GM12878 (cell line): ENCODE measurements at regions of chr9 and their contacts with region 1.

Region 1: DNA sequence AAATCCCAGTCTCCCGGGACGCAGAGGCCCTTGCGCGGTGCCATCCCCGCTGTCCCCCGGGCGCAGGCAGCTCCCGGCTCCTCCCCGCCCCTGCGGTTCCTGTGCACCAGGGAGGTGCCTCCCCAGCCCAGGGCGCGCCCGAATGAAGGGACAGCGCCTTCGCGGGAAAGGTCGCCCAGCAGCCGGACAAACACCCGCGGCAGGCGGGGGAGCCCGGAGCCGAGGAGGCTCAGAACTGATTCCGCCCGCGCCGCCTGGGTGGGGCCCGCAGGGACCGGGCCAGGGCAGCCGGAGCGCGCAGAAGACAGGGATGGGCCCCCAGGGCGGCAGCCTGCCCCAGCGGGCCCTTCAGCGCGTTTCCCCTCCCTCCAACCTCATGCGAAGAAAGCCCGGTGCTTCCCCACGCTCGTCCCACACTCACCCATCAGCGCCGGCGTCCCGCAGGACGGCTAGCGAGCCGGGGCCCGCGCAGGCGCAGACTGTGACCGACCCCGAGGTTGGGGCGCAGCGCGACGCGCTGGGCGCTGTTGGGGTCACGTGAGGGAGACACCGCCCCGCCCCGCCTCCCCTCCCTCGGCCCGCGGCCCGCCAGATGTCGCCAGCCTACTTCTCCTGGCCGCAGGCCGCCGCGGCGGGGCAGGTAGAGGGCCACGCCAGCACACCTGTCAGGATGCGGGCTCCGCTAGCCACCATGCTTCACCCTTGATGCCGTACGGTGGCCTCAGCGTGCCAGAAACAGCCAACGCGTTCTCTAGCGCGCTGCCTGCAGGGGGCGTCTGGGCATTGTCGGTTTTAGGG is at the start of gene SLC25A51:
- DNase-seq: peak; percentile 81
- ATAC-seq: peak; percentile 92
- H3K4me3 ChIP-seq: peak within 1 kb of the TSS; percentile 86
- H3K27ac ChIP-seq: peak within 1 kb of the TSS; percentile 76
- H3K4me1 ChIP-seq: peaks cover 10% of the 10 kb centered on the region
- H3K27me3 ChIP-seq: no peaks in the 10 kb centered on the region
- CTCF ChIP-seq: peak; percentile 91 to 97 (median 95); a peak in 5 of 6 replicates
- EP300 ChIP-seq: peak in 1 of 2 experiments; percentile 59; a peak in 1 of 4 replicates
- POLR2A ChIP-seq: peak; percentile 88
- RAD21 ChIP-seq: peak; percentile 72
- polyA plus RNA-seq, gene SLC25A51: 3.8 to 6.1 TPM

Region 2: GRCh38 chr9:37592108-37592951 is 311.5 kb before region 1 on chr9 and contains the start of gene TOMM5:
- CTCF ChIA-PET with region 1: interaction called, 3 read pairs
- POLR2A ChIA-PET with region 1: no interaction called
- RAD21 ChIA-PET with region 1: no interaction called
- SMC1A ChIA-PET with region 1: interaction called, 3 read pairs
- in situ Hi-C with region 1: no loop called
- intact Hi-C with region 1: loop called (anchors 10 kb)
- DNase-seq: peak; percentile 76
- ATAC-seq: peak; percentile 92
- H3K4me3 ChIP-seq: peak within 1 kb of the TSS; percentile 73
- H3K27ac ChIP-seq: peak within 1 kb of the TSS; percentile 94
- H3K4me1 ChIP-seq: peaks cover 8% of the 10 kb centered on the region
- H3K27me3 ChIP-seq: no peaks in the 10 kb centered on the region
- CTCF ChIP-seq: no peak
- EP300 ChIP-seq: no peak
- POLR2A ChIP-seq: peak; percentile 99
- RAD21 ChIP-seq: no peak
- polyA plus RNA-seq, gene TOMM5: 1,100 to 1,143 TPM

Region 3: GRCh38 chr9:37753489-37754190 is 150.2 kb before region 1 on chr9 and contains the start of gene TRMT10B:
- CTCF ChIA-PET with region 1: interaction called, 15 read pairs
- POLR2A ChIA-PET with region 1: interaction called, 6 read pairs
- RAD21 ChIA-PET with region 1: interaction called, 11 read pairs
- SMC1A ChIA-PET with region 1: interaction called, 5 read pairs
- in situ Hi-C with region 1: no loop called
- intact Hi-C with region 1: loop called (anchors 1 kb)
- DNase-seq: peak; percentile 34
- ATAC-seq: peak; percentile 97
- H3K4me3 ChIP-seq: peak within 1 kb of the TSS; percentile 92
- H3K27ac ChIP-seq: peak within 1 kb of the TSS; percentile 85
- H3K4me1 ChIP-seq: peaks cover 4% of the 10 kb centered on the region; the same call in 1 of the 2 replicates
- H3K27me3 ChIP-seq: no peaks in the 10 kb centered on the region; a peak in 1 of 4 replicates
- CTCF ChIP-seq: no peak
- EP300 ChIP-seq: no peak
- POLR2A ChIP-seq: peak; percentile 75
- RAD21 ChIP-seq: no peak
- polyA plus RNA-seq, gene TRMT10B: 5.0 to 7.6 TPM

Region 4: DNA sequence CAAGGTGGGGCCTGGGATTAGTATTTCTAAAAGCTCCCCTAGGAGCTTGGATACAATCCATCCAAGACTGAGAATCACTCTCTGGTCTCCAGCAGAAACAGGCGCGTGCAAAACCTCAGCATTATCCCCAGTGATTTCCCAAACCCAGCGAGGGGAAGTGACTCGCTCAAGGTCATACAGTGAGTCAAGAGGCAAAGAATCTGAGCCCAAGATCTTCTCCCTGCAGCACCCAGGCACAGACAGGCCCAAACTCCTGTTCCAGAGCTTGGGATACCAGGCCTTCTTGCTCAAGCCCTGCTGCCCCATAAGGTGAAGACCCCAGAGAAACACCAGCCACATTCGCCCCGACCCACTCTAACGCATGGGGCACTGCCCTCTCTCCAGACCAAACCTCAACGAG is 132.0 kb after region 1 on chr9:
- CTCF ChIA-PET with region 1: no interaction called
- POLR2A ChIA-PET with region 1: no interaction called
- RAD21 ChIA-PET with region 1: no interaction called
- SMC1A ChIA-PET with region 1: no interaction called
- in situ Hi-C with region 1: no loop called
- intact Hi-C with region 1: no loop called
- DNase-seq: no peak
- ATAC-seq: no peak
- H3K4me3 ChIP-seq: no peak overlapping the region
- H3K27ac ChIP-seq: no peak overlapping the region
- H3K4me1 ChIP-seq: peaks cover 5% of the 10 kb centered on the region
- H3K27me3 ChIP-seq: no peaks in the 10 kb centered on the region
- CTCF ChIP-seq: no peak
- EP300 ChIP-seq: no peak
- POLR2A ChIP-seq: no peak
- RAD21 ChIP-seq: no peak

Region 5: DNA sequence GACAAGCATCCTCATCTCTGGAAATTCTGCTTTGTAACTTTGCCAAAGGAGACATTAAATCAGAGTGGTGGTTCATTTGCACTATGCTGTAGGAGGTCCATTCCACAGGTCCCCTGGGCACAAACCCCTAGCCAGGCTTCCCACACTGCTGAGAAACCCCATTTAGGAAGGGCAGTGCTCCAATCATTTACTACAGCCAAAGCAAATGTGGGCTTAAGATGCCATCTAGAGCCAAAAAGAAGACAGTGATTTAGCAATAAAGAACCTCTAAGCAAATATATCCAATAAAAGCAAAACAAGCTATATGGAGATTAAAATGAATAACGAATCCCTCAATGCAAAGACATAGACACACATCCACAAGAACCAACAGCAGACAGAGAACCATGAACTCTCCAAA is 359.7 kb after region 1 on chr9:
- CTCF ChIA-PET with region 1: interaction called, 10 read pairs
- POLR2A ChIA-PET with region 1: no interaction called
- RAD21 ChIA-PET with region 1: interaction called, 6 read pairs
- SMC1A ChIA-PET with region 1: interaction called, 6 read pairs
- in situ Hi-C with region 1: no loop called
- intact Hi-C with region 1: no loop called
- DNase-seq: no peak
- ATAC-seq: peak; percentile 29; the same call in 1 of the 3 replicates
- H3K4me3 ChIP-seq: no peak overlapping the region
- H3K27ac ChIP-seq: no peak overlapping the region
- H3K4me1 ChIP-seq: no peaks in the 10 kb centered on the region
- H3K27me3 ChIP-seq: no peaks in the 10 kb centered on the region
- CTCF ChIP-seq: peak in 1 of 3 experiments; percentile 34; a peak in 1 of 6 replicates
- EP300 ChIP-seq: no peak
- POLR2A ChIP-seq: no peak
- RAD21 ChIP-seq: peak; percentile 70

Region 6: GRCh38 chr9:38392235-38393127 is 488.6 kb after region 1 on chr9 and contains the start of gene ALDH1B1:
- CTCF ChIA-PET with region 1: interaction called, 5 read pairs
- POLR2A ChIA-PET with region 1: no interaction called
- RAD21 ChIA-PET with region 1: interaction called, 3 read pairs
- SMC1A ChIA-PET with region 1: no interaction called
- in situ Hi-C with region 1: loop called (anchors 5 kb)
- intact Hi-C with region 1: no loop called
- DNase-seq: peak; percentile 38
- ATAC-seq: peak; percentile 98
- H3K4me3 ChIP-seq: peak within 1 kb of the TSS; percentile 93
- H3K27ac ChIP-seq: peak within 1 kb of the TSS; percentile 77
- H3K4me1 ChIP-seq: peaks cover 3% of the 10 kb centered on the region; the same call in 1 of the 2 replicates
- H3K27me3 ChIP-seq: no peaks in the 10 kb centered on the region
- CTCF ChIP-seq: peak; percentile 10 to 23 (median 16); a peak in 2 of 6 replicates
- EP300 ChIP-seq: no peak
- POLR2A ChIP-seq: peak; percentile 74
- RAD21 ChIP-seq: no peak
- polyA plus RNA-seq, gene ALDH1B1: 8.6 to 14.2 TPM